Activated CD8-positive, alpha-beta memory T cell treated with anti-CD3 and anti-CD28 coated beads, Interleukin-2, amount 10 ng/mL, durations not matched to agents 7 days and 5 days (primary cell): ENCODE measurements at regions of chr5 and their contacts with region 1.

Region 1: DNA sequence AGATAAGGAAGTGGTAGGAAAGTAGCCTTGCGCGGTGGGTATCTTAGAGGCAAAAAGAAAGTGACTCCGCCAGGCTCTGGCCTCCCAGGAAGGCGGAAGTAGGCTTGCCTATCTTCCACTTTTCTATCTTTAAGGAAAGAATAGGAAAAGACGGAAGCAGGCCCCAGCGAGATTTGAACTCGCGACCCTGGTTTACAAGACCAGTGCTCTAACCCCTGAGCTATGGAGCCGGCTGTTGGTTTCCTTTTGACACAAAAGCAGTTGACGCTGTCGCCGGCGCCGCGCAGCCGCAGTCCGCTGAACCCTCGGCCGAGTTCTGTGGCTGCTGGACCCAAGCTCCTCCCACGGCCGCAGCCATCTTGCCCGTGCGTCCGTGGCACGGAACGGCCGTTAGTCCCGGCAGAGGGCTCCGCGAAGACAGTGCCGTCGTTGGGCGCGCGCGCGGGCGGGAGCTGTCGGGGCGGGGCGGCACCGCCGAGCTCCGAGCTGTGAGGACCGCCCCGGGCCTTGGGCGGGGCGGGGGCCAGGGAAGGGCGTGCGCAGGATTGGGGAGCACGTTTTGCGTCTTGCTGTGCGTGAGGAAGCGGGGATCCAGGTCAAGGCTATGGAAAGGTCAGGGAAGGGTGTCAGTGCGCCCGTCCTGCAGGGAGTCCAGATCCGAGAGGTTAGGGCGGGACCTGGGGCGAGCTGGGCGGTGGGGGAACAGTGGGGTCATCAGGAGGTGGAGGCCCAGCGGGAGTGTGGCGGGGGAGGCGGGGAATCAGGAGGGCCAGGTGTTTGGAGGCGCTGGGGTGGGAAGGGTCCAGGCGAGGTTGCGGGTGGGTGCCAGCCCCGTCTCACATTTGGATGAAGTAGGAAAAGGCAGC is 13.2 kb downstream of the TRIM7 start:
- DNase-seq: peak; percentile 96
- ATAC-seq: peak; percentile 68
- H3K4me3 Mint-ChIP-seq: peak overlapping the region; percentile 98
- H3K27ac Mint-ChIP-seq: peak overlapping the region; percentile 97
- H3K4me1 Mint-ChIP-seq: peaks cover 26% of the 10 kb centered on the region
- H3K27me3 Mint-ChIP-seq: no peaks in the 10 kb centered on the region

Region 2: DNA sequence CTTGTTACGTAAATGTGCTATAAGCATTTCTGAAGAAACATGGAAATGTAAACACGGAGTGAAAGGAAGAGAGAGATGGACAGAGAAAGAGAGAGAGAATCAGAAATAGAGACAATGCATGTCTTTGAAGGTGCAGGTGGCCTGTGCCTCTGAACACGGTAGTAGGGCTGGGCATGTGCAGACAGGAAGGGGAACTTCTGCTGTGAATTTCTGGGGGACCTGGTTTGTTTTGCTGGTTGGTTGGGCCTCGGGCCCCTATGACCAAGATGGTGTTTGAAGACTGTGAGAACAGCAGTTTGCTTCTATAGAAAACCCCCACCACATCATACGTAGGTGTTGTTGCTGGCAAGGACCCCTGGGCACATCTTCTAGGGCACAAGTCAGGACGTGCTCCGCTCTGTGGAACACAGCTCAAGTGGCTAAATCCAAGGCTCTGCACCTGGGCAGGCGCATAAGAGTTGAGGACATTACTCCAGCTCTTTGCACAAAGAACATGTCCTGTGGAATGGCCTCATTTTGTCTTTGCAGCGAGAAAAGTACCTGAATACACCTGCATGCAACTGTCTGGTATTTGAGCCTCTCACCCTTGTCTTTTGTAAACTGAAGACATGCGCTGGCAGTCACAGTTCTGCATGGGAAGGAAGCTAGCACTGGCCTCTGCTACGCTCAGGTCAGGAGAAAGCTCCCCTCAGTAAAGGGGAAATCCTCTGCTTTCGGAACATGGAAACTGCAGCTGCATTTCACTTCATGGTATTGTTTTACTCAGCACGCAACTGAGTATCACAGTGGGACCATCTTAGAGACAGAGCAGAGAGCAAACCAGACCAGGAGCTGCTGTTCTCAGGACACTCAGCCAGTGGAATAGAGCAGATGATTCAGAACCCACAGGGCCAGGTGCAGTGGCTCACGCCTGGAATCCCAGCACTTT is 41.7 kb before region 1 on chr5:
- CTCF ChIA-PET with region 1: no interaction called
- DNase-seq: no peak
- ATAC-seq: no peak
- H3K4me3 Mint-ChIP-seq: no peak overlapping the region
- H3K27ac Mint-ChIP-seq: no peak overlapping the region
- H3K4me1 Mint-ChIP-seq: peaks cover 18% of the 10 kb centered on the region
- H3K27me3 Mint-ChIP-seq: peaks cover 24% of the 10 kb centered on the region

Region 3: GRCh38 chr5:181173420-181174342 is 18.1 kb before region 1 on chr5:
- CTCF ChIA-PET with region 1: interaction called, 36 read pairs
- DNase-seq: peak; percentile 83
- ATAC-seq: peak; percentile 75
- H3K4me3 Mint-ChIP-seq: peak overlapping the region; percentile 79
- H3K27ac Mint-ChIP-seq: peak overlapping the region; percentile 84
- H3K4me1 Mint-ChIP-seq: peaks cover 49% of the 10 kb centered on the region
- H3K27me3 Mint-ChIP-seq: peaks cover 61% of the 10 kb centered on the region

Region 4: GRCh38 chr5:181223058-181223728 is 31.4 kb after region 1 on chr5 and contains the start of gene TRIM41:
- CTCF ChIA-PET with region 1: interaction called, 54 read pairs
- DNase-seq: peak; percentile 99
- ATAC-seq: peak; percentile 65
- H3K4me3 Mint-ChIP-seq: peak within 1 kb of the TSS; percentile 89
- H3K27ac Mint-ChIP-seq: peak within 1 kb of the TSS; percentile 99
- H3K4me1 Mint-ChIP-seq: peaks cover 59% of the 10 kb centered on the region
- H3K27me3 Mint-ChIP-seq: peaks cover 5% of the 10 kb centered on the region
- total RNA-seq, gene TRIM41: 40.7 to 44.9 TPM

Region 5: GRCh38 chr5:181260387-181261319 is 68.9 kb after region 1 on chr5 and contains the start of gene TRIM52:
- CTCF ChIA-PET with region 1: interaction called, 11 read pairs
- DNase-seq: peak; percentile 96
- ATAC-seq: peak; percentile 84
- H3K4me3 Mint-ChIP-seq: peak within 1 kb of the TSS; percentile 96
- H3K27ac Mint-ChIP-seq: peak within 1 kb of the TSS; percentile 95
- H3K4me1 Mint-ChIP-seq: peaks cover 42% of the 10 kb centered on the region
- H3K27me3 Mint-ChIP-seq: no peaks in the 10 kb centered on the region
- total RNA-seq, gene TRIM52: 20.0 to 26.2 TPM